GM10248 (cell line): ENCODE measurements at regions of chr10 and their contacts with region 1.

Region 1: DNA sequence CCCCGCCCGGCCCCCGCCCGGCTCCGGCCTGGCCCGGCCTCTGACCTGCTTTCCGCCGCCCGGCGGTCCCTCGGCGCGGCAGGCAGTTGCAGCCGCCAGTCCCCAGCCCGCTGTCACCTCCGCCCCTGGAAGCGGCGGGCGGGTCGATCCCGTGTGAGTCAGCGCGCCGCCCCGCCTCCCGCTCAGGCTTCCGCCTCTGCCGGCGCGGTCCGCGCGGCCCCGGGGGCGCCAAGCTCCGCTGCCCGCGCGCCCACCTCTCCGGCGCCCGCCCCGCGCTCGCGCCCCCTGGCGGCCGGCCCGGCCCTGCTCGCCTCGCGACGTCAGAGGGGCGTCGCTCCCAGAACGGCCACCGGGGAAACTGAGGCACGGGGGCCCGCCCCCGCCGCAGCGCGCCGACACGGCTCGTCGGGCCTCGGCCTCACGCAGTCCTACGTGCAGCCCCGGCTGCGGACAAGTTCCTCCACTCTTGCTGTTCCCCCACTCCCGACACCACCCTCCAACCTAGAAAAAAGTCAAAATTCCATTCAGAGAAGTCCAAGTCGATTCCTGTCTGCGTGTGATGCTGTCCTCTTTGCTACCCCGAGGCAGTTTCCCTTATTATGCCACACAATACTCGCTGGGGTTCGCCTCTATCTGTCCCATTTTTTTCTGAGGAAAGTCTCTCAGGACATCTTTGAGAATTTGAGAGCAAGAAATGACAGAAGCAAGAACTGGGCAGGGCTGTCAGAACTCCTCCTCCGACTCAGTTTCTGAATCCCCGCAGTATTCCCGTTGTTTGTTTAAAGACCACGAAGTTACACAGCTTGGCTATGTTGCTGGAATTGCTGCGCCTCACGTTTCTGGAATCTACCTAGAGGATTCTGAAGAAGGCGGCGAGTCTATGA is at the start of gene DNMBP:
- DNase-seq: peak; percentile 92
- CTCF ChIP-seq: peak; percentile 89

Region 2: DNA sequence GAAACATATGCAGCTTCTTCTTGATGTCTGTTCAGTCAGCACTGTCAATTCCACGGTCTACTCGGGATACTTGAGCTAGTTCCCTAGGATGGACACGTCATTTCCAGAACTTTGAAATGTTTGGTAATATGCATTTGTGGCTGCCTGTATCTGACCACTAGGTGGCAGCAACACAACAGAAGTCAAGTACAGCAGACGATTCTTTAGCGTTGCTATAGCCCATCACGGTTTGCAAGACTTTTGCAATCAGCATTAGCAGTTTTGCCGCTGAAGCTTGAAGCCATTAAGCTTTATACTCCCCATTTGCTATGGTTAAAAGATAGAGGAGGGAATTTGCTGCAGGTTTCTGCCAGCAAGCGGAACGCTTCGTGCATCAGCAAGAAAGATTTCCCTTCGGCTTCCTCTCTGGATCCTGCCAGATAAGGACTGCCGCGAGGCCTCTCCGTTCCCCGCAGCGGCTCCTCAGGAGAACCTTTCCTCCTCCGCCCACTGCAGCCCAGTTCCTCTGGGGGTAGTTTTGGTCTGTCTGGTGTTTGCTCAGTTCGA is 164.1 kb before region 1 on chr10:
- CTCF ChIA-PET with region 1: interaction called, 23 read pairs
- POLR2A ChIA-PET with region 1: no interaction called
- DNase-seq: peak; percentile 69
- CTCF ChIP-seq: peak; percentile 90

Region 3: DNA sequence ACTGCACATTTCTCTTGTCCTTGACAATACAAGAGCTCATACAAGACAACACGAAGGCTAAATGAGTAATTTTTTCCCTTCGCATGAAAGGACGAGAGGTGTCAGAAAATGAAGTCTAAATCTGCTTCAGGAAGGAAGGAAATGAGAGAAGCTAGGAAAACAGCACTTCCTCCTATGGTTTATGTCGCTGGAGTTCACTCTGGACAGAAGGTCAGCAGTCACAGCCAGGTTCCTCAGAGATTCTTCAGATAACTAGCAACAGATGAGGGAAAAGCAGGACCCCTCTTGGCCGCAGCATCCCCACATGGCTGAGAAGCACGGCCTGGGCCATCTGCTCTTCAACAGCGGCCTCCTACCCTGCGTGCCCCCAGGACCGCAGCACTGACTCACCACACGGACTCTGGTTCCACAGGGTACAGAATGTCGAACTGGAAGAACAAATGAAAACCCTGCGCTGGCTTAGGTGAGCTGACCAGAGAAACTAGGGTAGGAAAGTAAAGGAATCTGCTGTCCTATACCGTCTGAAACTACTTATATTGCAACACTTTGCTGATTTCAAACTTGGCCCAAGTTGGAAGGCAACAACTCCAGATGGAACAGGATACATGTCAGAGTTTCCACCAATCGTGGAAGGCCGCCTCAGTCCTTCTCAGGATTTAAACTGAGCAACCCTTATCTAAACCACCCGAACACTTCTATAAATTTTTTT is 26.6 kb before region 1 on chr10:
- CTCF ChIA-PET with region 1: interaction called, 162 read pairs
- POLR2A ChIA-PET with region 1: interaction called, 7 read pairs
- DNase-seq: no peak
- CTCF ChIP-seq: no peak

Region 4: DNA sequence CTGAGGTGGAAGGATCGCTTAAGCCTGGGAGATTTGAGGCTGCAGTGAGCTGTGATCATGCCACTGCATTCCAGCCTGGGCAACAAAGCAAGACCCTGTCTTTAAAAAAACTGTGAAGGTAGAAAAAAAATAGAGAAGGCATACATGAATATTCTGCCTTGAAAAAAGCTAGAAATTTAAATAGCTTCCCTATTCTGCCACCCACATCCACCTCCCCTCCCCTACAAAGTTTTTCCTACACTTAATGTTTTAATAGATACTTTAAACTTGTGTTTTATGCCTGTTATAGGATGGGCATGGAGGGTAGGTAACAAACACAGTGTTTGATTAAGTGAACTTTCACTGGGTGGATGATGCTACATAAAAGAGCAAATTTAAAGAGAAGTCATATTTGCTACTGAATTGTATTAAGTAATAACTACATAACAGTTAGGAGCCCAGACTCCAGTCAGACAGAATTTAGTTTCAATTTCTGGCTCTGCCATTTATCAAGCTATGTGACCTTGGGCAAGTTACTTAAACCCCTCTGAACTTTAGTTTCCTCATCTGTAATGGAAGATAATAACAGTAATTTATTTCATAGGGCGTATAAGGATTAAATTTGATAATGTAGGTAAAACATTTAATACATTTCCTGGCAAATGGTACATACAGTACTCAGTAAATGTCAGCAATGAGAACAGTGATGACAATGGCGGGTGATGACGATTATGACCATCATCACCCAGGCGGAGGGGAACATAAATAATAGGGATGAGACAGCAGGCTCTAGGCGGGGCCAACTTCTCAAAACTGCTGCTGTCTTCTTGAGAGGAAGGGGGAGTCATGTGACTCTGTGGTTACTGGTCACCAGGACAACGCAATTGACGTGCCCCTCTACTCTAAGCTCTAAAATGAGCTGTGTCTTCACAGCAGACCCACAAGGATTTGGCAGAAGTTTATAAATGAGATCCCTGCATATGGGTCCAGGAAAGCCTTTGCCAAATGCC is 16.0 kb before region 1 on chr10:
- CTCF ChIA-PET with region 1: interaction called, 146 read pairs
- POLR2A ChIA-PET with region 1: no interaction called
- DNase-seq: peak; percentile 76
- CTCF ChIP-seq: no peak

Region 5: GRCh38 chr10:100020142-100020885 is 10.3 kb after region 1 on chr10:
- CTCF ChIA-PET with region 1: interaction called, 51 read pairs
- POLR2A ChIA-PET with region 1: interaction called, 3 read pairs
- DNase-seq: peak; percentile 71
- CTCF ChIP-seq: peak; percentile 30

Region 6: GRCh38 chr10:100038561-100039071 is 28.6 kb after region 1 on chr10:
- CTCF ChIA-PET with region 1: interaction called, 11 read pairs
- POLR2A ChIA-PET with region 1: interaction called, 3 read pairs
- DNase-seq: no peak
- CTCF ChIP-seq: no peak